ENCODE measurements at regions of chr1 and their contacts with region 1.

Region 1: GRCh38 chr1:174769961-174770549 is 229.7 kb upstream of the CACYBP start:
- DNase-seq: peak; percentile 78
- H3K4me3 Mint-ChIP-seq: no peak overlapping the region
- H3K27ac Mint-ChIP-seq: no peak overlapping the region
- H3K4me1 Mint-ChIP-seq: no peaks in the 10 kb centered on the region
- H3K27me3 Mint-ChIP-seq: no peaks in the 10 kb centered on the region
- CTCF ChIP-seq: peak; percentile 80

Region 2: GRCh38 chr1:174800216-174800851 is 30.3 kb after region 1 on chr1:
- CTCF ChIA-PET with region 1: interaction called, 11 read pairs
- POLR2A ChIA-PET with region 1: no interaction called
- intact Hi-C with region 1: no loop called
- DNase-seq: no peak
- H3K4me3 Mint-ChIP-seq: no peak overlapping the region
- H3K27ac Mint-ChIP-seq: no peak overlapping the region
- H3K4me1 Mint-ChIP-seq: peaks cover 8% of the 10 kb centered on the region
- H3K27me3 Mint-ChIP-seq: no peaks in the 10 kb centered on the region
- CTCF ChIP-seq: no peak

Region 3: GRCh38 chr1:174836543-174836942 is 66.5 kb after region 1 on chr1:
- CTCF ChIA-PET with region 1: no interaction called
- POLR2A ChIA-PET with region 1: no interaction called
- intact Hi-C with region 1: no loop called
- DNase-seq: no peak
- H3K4me3 Mint-ChIP-seq: no peak overlapping the region
- H3K27ac Mint-ChIP-seq: no peak overlapping the region
- H3K4me1 Mint-ChIP-seq: no peaks in the 10 kb centered on the region
- H3K27me3 Mint-ChIP-seq: no peaks in the 10 kb centered on the region
- CTCF ChIP-seq: no peak

Region 4: DNA sequence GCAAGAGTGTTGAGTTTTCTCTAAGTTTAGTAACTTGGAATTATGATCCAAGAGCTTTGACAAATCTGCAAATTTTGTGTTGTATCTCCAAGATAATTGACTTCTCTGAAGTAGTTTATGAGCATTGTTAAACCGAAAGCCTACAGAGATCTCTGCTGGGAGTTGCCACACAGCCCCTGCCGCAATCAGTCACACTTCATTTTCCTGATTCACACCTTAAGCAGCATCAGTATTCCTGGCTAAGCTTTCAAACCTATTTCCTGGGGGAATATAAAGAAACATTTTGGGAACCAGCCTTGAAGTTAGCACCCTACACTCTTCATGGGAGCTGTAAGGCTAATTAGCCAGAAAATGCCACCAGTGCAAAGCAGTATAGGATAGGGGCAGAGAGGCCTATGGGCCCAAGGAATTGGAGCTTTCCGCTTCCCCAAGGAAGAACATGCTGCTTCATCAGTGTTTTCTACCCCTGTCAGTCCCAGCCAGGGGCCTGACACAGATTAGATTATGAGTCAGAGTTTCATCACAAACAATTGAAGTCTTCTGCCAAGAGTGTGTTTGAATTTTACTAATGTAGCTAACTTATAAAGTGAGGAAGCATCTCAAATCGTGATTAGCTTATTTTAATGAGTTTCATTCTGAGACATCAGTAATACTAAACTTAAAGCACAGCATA is 206.5 kb after region 1 on chr1:
- CTCF ChIA-PET with region 1: interaction called, 76 read pairs
- POLR2A ChIA-PET with region 1: interaction called, 3 read pairs
- intact Hi-C with region 1: no loop called
- DNase-seq: peak; percentile 83
- H3K4me3 Mint-ChIP-seq: no peak overlapping the region
- H3K27ac Mint-ChIP-seq: no peak overlapping the region
- H3K4me1 Mint-ChIP-seq: peaks cover 15% of the 10 kb centered on the region
- H3K27me3 Mint-ChIP-seq: no peaks in the 10 kb centered on the region
- CTCF ChIP-seq: no peak

Region 5: DNA sequence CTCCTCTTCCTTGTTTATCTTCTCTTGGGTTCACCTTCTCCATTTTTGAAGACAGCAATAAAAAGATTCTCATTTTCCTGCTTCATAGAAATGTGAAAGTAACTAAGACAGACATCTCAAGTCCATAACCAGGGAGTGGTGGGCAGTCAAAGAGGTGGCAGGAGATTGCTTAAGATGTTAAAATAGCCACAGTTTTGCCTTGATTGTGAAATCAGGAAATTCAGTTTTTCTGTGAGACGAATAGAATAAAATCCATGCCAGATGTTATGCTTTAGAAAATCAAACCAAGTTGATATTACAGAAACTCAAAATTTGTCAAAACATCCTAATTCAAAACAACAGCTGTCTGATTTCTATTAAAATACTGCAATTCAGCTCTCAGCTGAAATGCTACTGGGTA is 354.8 kb after region 1 on chr1:
- CTCF ChIA-PET with region 1: interaction called, 4 read pairs
- POLR2A ChIA-PET with region 1: no interaction called
- intact Hi-C with region 1: loop called (anchors 1 kb)
- DNase-seq: peak; percentile 36
- H3K4me3 Mint-ChIP-seq: no peak overlapping the region
- H3K27ac Mint-ChIP-seq: no peak overlapping the region
- H3K4me1 Mint-ChIP-seq: peaks cover 13% of the 10 kb centered on the region
- H3K27me3 Mint-ChIP-seq: no peaks in the 10 kb centered on the region
- CTCF ChIP-seq: no peak